Activated B cell treated with CpG ODN at 0.5 μM for 24 hours (primary cell): ENCODE measurements at regions of chr4 and their contacts with region 1.

Region 1: DNA sequence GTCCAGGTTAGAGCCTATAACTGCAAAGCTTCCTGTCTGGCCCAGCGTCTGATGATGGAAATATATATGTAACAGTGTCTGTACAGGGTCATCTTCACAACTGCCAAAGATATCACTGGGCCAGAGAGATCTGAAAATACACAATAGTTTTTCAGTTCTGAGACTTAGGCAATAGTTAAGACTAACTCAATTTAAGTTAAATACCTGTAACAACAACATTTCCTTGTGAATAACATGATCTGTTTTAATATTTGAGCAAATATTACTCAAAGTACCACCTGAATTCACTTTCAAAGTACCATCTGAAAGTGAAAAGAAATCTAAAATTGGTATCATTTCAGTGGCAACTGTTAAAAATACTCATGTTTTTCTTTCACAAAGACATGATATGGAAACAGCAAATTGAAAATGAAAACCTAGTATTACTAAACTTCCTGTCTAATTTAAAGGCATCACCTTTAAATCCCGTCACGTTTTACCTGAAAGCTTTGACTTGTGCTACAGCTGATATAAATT is 9.6 kb downstream of the ZAR1 start:
- DNase-seq: no peak
- ATAC-seq: no peak
- H3K4me3 Mint-ChIP-seq: no peak overlapping the region
- H3K27ac Mint-ChIP-seq: no peak overlapping the region
- H3K4me1 Mint-ChIP-seq: no peaks in the 10 kb centered on the region
- H3K27me3 Mint-ChIP-seq: no peaks in the 10 kb centered on the region
- CTCF ChIP-seq: no peak

Region 2: DNA sequence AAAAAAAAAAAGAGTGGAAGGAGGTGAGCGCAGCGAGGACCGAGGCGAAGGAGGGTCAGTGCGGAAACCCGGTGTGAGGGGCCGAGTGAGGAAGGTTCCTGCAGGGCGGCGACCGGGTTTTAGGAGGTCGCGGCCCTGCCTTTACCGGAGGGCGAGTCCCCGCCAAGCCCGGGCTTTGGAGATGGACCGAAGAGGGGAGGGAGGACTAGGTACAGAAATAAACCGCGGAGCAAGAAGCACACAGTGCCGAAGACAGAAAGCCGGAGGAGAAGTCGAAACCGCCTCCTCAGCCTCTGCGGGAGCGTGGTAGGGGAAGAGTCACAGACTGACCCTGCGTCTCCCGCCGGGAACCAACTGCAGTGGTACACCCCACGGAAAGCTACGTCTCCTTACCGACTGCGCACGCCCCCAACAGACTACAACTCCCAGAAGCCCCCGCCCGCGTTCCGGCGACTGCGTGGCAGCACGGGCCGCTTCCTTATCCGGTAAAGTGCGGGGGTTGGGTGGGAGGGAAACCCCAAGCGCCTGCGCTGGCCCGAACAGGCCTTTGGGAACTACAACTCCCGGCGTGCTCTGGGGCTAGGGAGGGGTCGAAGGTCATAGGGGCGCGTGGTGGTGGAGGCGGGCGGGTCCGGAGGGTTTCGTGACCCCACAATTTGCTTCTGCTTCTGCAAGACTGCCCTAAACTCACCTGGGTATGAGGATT is 585.2 kb before region 1 on chr4 and contains the start of gene NFXL1:
- CTCF ChIA-PET with region 1: no interaction called
- POLR2A ChIA-PET with region 1: no interaction called
- intact Hi-C with region 1: no loop called
- DNase-seq: peak; percentile 90
- ATAC-seq: peak; percentile 96
- H3K4me3 Mint-ChIP-seq: peak within 1 kb of the TSS; percentile 98
- H3K27ac Mint-ChIP-seq: peak within 1 kb of the TSS; percentile 92
- H3K4me1 Mint-ChIP-seq: peaks cover 31% of the 10 kb centered on the region
- H3K27me3 Mint-ChIP-seq: no peaks in the 10 kb centered on the region
- CTCF ChIP-seq: no peak
- total RNA-seq, gene NFXL1: 10.0 and 11.1 TPM in 2 replicates

Region 3: DNA sequence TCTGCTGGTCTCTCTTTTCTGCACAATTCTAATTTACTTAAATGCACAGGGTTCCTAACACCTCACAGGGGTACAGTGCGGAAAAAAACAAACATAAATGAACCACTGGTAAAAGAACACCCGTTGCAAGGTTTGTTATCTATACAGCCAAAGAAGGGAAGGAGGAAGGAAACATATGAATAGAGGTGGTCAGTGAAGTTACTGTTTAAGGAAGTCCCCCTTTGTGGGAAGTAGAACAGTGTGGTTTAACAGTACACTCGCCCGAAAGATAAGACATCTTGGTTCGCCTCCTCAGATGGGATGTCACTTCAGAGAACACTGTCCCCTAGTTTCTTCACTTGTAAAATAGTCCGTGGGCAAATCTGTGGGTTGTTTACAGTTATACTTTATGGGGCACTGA is 287.4 kb before region 1 on chr4:
- CTCF ChIA-PET with region 1: no interaction called
- POLR2A ChIA-PET with region 1: no interaction called
- intact Hi-C with region 1: no loop called
- DNase-seq: no peak
- ATAC-seq: peak; percentile 73
- H3K4me3 Mint-ChIP-seq: peak overlapping the region; percentile 68
- H3K27ac Mint-ChIP-seq: peak overlapping the region; percentile 83
- H3K4me1 Mint-ChIP-seq: peaks cover 38% of the 10 kb centered on the region
- H3K27me3 Mint-ChIP-seq: no peaks in the 10 kb centered on the region
- CTCF ChIP-seq: no peak

Region 4: DNA sequence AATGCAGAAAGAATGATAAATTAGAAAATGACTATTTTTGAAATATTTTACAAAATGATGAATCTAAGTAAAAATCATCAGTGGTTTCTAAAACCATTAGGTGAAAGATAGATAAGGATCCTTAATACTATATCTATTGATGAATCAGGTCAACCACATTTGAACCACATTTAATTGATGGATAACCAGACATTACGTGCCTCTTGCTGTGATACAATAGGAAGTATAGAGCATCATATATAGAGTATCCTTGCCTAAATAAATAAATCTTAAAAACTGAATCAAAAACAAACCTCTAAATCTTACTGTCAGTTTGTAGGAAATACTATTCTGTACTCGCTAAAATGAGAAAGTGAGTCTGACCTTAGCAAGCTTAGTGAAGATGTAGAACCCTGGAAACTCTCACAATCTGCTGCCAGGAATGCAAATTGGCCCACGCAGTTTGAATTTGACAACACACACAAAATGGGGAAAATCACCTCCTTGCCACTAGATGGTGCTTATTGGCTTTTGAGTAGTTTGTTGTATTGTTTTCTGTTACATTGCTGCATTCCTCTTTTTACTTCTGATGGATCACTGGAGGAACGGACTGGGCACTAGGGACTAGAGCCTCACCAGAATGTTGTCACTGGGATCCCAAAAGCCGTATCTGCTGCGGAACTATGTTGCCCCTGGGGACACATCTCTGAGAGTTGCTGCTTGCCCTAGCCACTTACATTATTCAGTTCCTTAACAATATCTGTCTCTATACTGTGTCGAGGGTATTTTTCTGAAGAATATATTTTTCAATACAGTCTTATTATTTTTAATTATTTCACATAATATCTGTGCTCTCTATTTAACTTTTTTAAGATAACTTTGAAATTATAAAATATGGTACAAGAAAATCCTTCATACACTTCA is 183.6 kb before region 1 on chr4:
- CTCF ChIA-PET with region 1: no interaction called
- POLR2A ChIA-PET with region 1: no interaction called
- intact Hi-C with region 1: loop called (anchors 5 kb)
- DNase-seq: no peak
- ATAC-seq: peak; percentile 28
- H3K4me3 Mint-ChIP-seq: no peak overlapping the region
- H3K27ac Mint-ChIP-seq: no peak overlapping the region
- H3K4me1 Mint-ChIP-seq: no peaks in the 10 kb centered on the region
- H3K27me3 Mint-ChIP-seq: no peaks in the 10 kb centered on the region
- CTCF ChIP-seq: no peak

Region 5: DNA sequence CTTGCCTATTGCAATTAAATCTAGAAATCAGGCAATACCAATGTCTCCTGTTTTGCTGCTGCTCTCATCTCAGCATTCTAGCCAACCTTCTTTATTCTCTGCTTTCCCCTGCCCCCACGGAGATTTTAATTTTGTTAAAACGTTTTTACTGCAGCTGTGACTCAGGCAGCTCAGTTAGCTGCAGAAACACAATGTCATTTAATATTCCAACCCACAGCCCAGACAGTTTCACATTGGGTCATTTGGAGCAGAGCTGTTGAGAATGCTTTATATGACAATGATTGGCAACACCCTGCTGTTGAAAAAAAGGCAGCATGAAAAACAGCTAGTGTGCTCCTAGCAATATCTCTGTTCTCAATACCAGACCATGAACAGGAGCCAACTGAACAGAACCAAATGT is 29.0 kb before region 1 on chr4:
- CTCF ChIA-PET with region 1: no interaction called
- POLR2A ChIA-PET with region 1: no interaction called
- intact Hi-C with region 1: no loop called
- DNase-seq: no peak
- ATAC-seq: no peak
- H3K4me3 Mint-ChIP-seq: no peak overlapping the region
- H3K27ac Mint-ChIP-seq: no peak overlapping the region
- H3K4me1 Mint-ChIP-seq: no peaks in the 10 kb centered on the region
- H3K27me3 Mint-ChIP-seq: peaks cover 8% of the 10 kb centered on the region
- CTCF ChIP-seq: no peak